Activated CD8-positive, alpha-beta T cell treated with anti-CD3 and anti-CD28 coated beads, Interleukin-2, amount 10 ng/mL, durations not matched to agents 7 days and 5 days (primary cell): ENCODE measurements at regions of chr10 and their contacts with region 1.

Region 1: DNA sequence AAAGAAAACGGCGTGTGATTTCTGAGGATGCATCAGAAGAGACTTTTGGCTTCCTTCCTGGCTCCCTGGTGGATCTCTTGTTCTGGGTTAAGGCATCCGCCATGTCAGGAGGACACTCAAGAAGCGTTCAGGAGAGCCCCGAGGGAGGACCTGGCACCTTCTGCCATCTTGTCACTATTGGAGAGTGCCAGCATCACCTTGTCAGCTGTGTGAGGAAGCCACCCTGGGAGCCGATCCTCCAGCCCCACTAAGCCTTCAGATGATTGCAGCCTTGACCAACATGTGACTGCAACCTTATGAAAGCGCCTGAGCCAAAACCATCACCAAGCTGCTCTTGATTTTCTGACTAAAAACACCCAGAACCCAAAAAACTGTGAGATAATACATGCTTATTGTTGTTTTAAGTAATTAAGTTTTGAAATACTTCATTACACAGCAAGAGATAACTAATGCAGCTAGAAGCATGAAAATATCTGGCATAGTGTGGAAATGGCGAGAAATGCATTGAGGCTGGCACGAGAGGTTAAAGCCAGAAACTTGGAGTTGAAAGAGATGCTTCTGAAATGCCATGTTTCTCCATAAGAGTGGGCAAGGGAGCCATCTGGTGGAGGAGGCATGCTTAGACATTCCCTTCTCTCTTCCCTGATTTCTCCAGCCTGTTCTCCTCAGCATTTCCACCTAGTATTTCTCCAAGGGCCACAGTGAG is 5.4 kb upstream of the ZFYVE27 start:
- DNase-seq: peak; percentile 61
- ATAC-seq: no peak
- H3K4me3 Mint-ChIP-seq: no peak overlapping the region
- H3K27ac Mint-ChIP-seq: no peak overlapping the region
- H3K4me1 Mint-ChIP-seq: peaks cover 6% of the 10 kb centered on the region
- H3K27me3 Mint-ChIP-seq: peaks cover 4% of the 10 kb centered on the region

Region 2: DNA sequence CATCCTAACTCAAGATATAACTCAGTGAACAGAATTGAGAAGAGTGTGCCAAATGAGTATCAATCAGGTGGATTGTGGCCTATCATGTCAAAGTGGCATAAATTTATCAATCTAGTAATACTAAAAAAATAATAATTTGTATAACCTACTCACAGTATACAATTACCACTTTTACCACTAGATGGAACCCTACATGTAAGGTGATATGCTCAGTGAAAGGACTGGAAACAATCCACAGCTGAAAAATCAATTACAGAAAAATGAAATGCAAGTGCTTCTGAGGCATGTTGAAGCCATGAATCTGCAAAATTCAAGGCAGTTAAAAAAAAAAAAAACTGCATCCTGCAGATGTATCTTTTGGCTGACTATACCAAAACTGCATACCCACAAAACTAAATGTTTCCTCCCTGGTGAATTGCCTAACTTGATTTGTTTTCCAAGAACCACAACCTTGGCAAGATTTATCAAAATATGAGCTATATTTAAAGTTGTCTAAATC is 453.0 kb before region 1 on chr10:
- CTCF ChIA-PET with region 1: no interaction called
- POLR2A ChIA-PET with region 1: no interaction called
- DNase-seq: no peak
- ATAC-seq: peak; percentile 76
- H3K4me3 Mint-ChIP-seq: no peak overlapping the region
- H3K27ac Mint-ChIP-seq: no peak overlapping the region
- H3K4me1 Mint-ChIP-seq: peaks cover 10% of the 10 kb centered on the region
- H3K27me3 Mint-ChIP-seq: no peaks in the 10 kb centered on the region

Region 3: GRCh38 chr10:97686962-97687784 is 44.3 kb before region 1 on chr10 and contains the start of gene AVPI1:
- CTCF ChIA-PET with region 1: interaction called, 18 read pairs
- POLR2A ChIA-PET with region 1: interaction called, 4 read pairs
- DNase-seq: peak; percentile 95
- ATAC-seq: peak; percentile 97
- H3K4me3 Mint-ChIP-seq: peak within 1 kb of the TSS; percentile 82
- H3K27ac Mint-ChIP-seq: peak within 1 kb of the TSS; percentile 74
- H3K4me1 Mint-ChIP-seq: peaks cover 17% of the 10 kb centered on the region
- H3K27me3 Mint-ChIP-seq: no peaks in the 10 kb centered on the region
- total RNA-seq, gene AVPI1: 1.1 to 1.7 TPM